MCF 10A (cell line): ENCODE measurements at regions of chr6 and their contacts with region 1.

Region 1: GRCh38 chr6:147506704-147507114 is 1.8 kb upstream of the SAMD5 start:
- DNase-seq: peak; percentile 76
- H3K4me3 Mint-ChIP-seq: peak overlapping the region; percentile 86
- H3K27ac Mint-ChIP-seq: no peak overlapping the region
- H3K4me1 Mint-ChIP-seq: peaks cover 24% of the 10 kb centered on the region
- H3K27me3 Mint-ChIP-seq: no peaks in the 10 kb centered on the region
- CTCF ChIP-seq: peak; percentile 95

Region 2: DNA sequence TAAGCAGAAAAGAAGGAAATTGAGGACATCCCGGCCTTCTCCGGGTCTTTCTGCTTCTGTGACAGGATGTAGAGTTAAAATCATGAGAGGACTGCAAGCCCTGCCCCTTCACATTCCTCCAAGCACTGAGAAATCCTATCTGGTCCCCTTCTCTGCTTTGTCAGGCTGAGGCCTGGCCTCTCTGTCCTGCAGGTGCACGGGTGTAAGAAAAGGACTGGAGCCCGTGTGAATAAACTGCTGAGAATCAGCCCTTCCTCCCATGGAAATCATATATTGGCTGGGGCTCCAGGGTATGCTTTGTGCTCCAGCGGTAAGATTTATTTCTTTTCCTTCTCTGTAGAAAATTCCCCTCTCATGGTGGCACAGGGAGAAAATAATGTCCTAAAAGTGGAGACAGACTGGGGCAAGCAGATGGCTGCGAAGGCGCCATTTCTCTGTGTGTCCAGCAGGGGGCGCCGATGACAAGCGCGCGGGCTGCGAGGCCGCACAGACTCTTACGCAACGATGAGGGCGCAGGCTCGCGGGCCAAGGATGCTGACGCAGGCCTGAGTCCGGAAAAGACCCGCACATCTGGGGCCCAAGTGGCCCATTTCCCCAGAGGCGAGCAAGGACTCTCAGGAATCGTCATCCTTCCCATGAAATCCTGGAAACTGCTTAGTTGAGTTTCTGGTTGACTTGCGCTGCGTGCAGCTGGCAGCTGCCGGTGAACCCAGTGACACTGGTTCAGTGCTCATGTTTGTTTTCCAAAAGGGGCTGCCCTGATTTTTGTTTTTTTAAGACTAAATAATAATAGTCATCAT is 649.3 kb before region 1 on chr6:
- CTCF ChIA-PET with region 1: no interaction called
- POLR2A ChIA-PET with region 1: no interaction called
- intact Hi-C with region 1: loop called (anchors 5 kb)
- DNase-seq: peak; percentile 78
- H3K4me3 Mint-ChIP-seq: no peak overlapping the region
- H3K27ac Mint-ChIP-seq: no peak overlapping the region
- H3K4me1 Mint-ChIP-seq: no peaks in the 10 kb centered on the region
- H3K27me3 Mint-ChIP-seq: no peaks in the 10 kb centered on the region
- CTCF ChIP-seq: peak; percentile 96

Region 3: DNA sequence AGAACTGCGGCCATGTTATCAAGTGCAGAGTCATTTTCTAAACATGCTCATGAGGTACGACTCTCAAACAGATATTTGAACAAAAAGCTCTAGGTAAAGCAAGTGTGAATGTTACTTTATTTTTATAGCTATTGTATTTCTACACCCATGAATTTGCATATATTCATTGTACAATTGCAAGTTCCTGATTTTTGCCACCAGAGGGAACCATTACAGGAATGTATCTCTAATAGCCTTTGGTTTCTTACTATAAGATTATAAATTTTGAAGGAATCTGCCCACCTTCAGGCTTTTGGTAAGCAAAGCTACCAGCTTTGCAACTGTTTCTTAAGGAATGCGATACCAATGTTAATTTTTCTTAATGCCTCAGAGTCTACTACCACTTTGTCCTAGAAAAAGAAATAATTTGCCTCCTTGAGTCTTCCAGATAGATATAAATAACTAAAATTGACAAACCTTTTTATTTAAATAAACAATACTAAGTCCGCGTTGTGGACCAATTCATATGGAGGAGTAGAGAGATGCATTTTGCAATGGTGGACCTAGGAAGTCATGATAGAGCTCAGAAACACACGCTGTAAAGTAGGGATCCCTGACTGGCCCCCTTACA is 123.7 kb before region 1 on chr6:
- CTCF ChIA-PET with region 1: interaction called, 10 read pairs
- POLR2A ChIA-PET with region 1: interaction called, 3 read pairs
- intact Hi-C with region 1: no loop called
- DNase-seq: peak; percentile 50
- H3K4me3 Mint-ChIP-seq: no peak overlapping the region
- H3K27ac Mint-ChIP-seq: no peak overlapping the region
- H3K4me1 Mint-ChIP-seq: no peaks in the 10 kb centered on the region
- H3K27me3 Mint-ChIP-seq: no peaks in the 10 kb centered on the region
- CTCF ChIP-seq: peak; percentile 51

Region 4: GRCh38 chr6:147486683-147487082 is 20.0 kb before region 1 on chr6:
- CTCF ChIA-PET with region 1: no interaction called
- POLR2A ChIA-PET with region 1: no interaction called
- intact Hi-C with region 1: no loop called
- DNase-seq: no peak
- H3K4me3 Mint-ChIP-seq: no peak overlapping the region
- H3K27ac Mint-ChIP-seq: no peak overlapping the region
- H3K4me1 Mint-ChIP-seq: no peaks in the 10 kb centered on the region
- H3K27me3 Mint-ChIP-seq: no peaks in the 10 kb centered on the region
- CTCF ChIP-seq: no peak

Region 5: DNA sequence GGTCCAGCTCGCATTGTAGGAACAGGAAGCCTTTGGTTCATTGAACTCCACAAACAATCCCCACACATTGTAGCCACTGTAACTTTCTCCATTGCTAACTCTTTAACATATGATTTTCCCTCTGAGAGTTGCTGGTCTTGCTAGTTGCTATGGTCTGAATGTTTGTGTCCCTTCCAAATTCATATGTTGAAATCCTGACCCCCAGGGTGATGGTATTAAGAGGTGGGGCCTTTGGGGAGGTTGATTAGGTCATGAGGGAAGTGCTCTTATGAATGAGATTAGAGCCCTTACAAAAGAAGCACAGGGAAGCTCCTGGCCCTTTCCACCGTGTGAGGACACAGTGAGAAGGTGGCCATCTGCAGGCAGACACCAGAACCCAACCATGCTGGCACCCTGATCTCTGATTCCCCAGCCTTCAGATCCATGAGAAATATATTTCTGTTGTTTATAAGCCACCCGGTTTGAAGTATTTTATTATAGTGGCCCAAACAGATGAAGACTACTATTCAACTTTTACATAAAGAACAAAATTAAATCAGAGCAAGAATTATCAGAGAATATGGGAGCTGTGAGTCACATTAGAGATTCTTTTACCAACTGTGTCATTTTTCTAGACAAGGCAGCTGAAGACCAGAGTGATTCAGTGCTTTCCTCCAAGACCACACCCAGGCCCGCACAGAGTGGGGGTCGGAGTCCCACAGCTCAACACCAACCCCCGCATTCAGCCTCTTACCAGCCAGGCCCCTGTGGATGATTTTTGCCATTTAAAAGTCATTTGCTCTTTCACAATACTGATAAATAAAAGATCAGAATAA is 144.7 kb after region 1 on chr6:
- CTCF ChIA-PET with region 1: no interaction called
- POLR2A ChIA-PET with region 1: no interaction called
- intact Hi-C with region 1: loop called (anchors 2 kb)
- DNase-seq: peak; percentile 37
- H3K4me3 Mint-ChIP-seq: no peak overlapping the region
- H3K27ac Mint-ChIP-seq: no peak overlapping the region
- H3K4me1 Mint-ChIP-seq: peaks cover 7% of the 10 kb centered on the region
- H3K27me3 Mint-ChIP-seq: no peaks in the 10 kb centered on the region
- CTCF ChIP-seq: peak; percentile 10

Region 6: DNA sequence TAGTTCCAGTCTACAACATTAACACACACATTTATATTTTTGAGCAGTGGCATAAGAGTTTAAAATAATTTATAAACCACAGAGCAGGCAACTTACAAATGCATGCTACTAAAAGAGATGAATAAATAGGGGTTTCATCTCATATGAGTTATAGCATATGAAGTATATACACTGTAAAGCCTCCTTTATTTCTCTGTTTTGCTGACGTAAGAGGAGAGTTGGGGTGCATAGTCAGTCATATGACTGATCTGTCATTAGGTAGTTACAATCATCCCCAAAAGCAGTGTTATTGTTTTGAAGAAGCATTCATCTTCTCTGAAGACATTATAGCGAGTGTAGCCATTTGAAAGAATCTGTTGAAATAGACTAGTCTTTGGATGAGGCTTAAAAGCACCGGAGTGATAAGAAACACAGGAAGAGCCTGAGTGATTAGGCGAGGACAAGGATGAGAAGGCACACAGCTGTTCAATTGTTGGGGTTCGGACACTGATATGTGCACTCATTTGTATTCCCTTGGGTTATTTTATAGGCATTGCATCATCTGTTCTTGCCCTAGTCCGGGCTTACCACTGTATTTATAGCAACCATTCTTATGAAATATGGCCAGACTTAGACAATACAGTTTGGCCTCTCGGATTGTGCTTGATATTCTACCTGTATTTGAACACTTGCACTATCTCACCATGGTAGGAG is 327.5 kb after region 1 on chr6:
- CTCF ChIA-PET with region 1: no interaction called
- POLR2A ChIA-PET with region 1: no interaction called
- intact Hi-C with region 1: no loop called
- DNase-seq: no peak
- H3K4me3 Mint-ChIP-seq: no peak overlapping the region
- H3K27ac Mint-ChIP-seq: no peak overlapping the region
- H3K4me1 Mint-ChIP-seq: peaks cover 7% of the 10 kb centered on the region
- H3K27me3 Mint-ChIP-seq: no peaks in the 10 kb centered on the region
- CTCF ChIP-seq: no peak

Region 7: DNA sequence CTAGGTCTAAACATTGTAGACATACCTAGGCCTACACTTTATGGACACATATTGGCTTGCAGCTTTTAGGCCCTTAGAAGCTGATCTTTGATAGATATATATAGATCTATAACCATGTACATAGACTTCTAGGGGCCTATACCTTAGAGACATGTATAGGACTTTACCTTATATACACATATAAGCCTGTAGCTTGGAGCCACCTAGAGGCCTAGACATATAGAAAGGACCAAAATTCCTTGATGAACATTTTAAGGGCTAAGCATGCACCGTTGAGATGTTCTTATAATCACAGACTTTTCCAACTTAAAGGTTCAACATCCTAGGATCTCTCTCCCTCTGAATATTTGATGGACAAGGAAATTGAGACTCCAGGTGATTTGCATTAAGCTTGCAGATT is 464.3 kb after region 1 on chr6:
- CTCF ChIA-PET with region 1: interaction called, 101 read pairs
- POLR2A ChIA-PET with region 1: interaction called, 4 read pairs
- intact Hi-C with region 1: loop called (anchors 1 kb)
- DNase-seq: peak; percentile 52
- H3K4me3 Mint-ChIP-seq: no peak overlapping the region
- H3K27ac Mint-ChIP-seq: no peak overlapping the region
- H3K4me1 Mint-ChIP-seq: peaks cover 18% of the 10 kb centered on the region
- H3K27me3 Mint-ChIP-seq: no peaks in the 10 kb centered on the region
- CTCF ChIP-seq: peak; percentile 61

Region 8: DNA sequence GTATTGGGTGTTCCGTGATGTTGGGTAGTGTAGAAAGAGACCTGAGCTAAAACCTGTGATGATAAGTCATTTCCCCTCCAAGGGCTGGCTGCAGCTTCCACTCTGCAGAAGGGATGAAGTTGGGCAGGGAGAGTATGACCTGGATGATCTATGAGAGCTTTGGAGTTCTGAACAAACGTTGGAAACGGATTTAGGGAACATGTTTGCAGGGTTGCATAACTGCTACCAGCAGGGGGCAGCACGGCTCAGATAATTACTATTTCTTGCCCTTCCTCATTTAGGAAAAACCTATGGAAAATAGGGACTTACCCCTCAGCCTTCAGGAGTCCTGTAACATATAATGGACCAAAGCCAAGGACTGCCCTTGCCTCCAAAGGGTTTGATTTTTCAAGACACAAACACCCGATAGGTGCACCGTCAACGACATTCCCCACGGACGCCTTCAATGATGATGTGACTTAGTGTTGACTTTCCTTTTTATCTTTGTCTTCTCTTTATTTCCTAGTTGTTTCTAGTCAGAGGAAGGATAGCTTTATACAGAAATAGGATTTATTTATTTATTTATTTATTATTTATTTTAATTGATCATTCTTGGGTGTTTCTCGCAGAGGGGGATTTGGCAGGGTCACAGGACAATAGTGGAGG is 671.0 kb after region 1 on chr6:
- CTCF ChIA-PET with region 1: interaction called, 25 read pairs
- POLR2A ChIA-PET with region 1: no interaction called
- intact Hi-C with region 1: no loop called
- DNase-seq: peak; percentile 72
- H3K4me3 Mint-ChIP-seq: no peak overlapping the region
- H3K27ac Mint-ChIP-seq: no peak overlapping the region
- H3K4me1 Mint-ChIP-seq: no peaks in the 10 kb centered on the region
- H3K27me3 Mint-ChIP-seq: no peaks in the 10 kb centered on the region
- CTCF ChIP-seq: peak; percentile 76